MCF 10A (cell line): ENCODE measurements at regions of chrX and their contacts with region 1.

Region 1: GRCh38 chrX:43581888-43582515 is 74.1 kb upstream of the MAOA start:
- DNase-seq: peak; percentile 85
- H3K4me3 Mint-ChIP-seq: no peak overlapping the region
- H3K27ac Mint-ChIP-seq: peak overlapping the region; percentile 84
- H3K4me1 Mint-ChIP-seq: peaks cover 9% of the 10 kb centered on the region
- H3K27me3 Mint-ChIP-seq: peaks cover 12% of the 10 kb centered on the region
- CTCF ChIP-seq: no peak

Region 2: DNA sequence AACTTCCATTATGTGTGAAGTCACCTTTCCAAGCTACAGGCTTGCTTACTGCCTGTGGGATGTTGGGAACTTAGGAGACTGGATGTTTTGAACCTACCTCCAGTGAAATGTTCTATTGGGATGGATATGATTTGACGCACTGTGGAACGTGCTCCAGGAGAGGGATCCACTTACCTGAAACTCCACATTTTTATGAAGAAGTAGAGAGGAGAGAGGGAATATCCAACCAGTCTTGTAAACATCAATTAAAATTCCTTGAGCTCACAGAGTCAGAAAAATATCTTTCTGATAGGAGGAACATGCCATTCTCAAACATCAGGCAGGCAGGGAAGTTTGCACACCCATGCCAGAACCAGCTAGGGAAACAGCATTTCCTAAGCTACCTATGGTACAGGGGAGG is 17.0 kb before region 1 on chrX:
- CTCF ChIA-PET with region 1: interaction called, 5 read pairs
- POLR2A ChIA-PET with region 1: interaction called, 20 read pairs
- intact Hi-C with region 1: no loop called
- DNase-seq: no peak
- H3K4me3 Mint-ChIP-seq: no peak overlapping the region
- H3K27ac Mint-ChIP-seq: no peak overlapping the region
- H3K4me1 Mint-ChIP-seq: peaks cover 20% of the 10 kb centered on the region
- H3K27me3 Mint-ChIP-seq: peaks cover 80% of the 10 kb centered on the region
- CTCF ChIP-seq: no peak

Region 3: DNA sequence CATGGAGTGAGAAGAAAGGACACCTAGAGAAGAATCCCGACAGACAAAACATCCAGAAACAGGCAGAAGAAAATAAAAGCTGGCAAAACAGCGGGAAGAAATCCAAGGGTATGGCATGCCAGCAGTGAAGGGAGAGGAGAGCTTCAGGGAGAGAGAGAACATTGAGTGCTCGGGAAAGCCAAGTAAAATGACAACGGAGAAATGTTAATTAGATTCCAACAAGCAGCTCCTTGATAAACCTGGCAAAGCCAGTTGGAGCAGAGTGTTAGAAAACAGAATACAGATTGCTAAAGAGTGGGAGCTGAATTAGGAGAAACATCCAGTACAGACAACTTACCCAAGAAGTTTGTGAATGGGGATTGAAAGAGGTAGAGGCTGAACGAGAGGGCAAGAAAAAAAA is 33.7 kb after region 1 on chrX:
- CTCF ChIA-PET with region 1: interaction called, 3 read pairs
- POLR2A ChIA-PET with region 1: interaction called, 20 read pairs
- intact Hi-C with region 1: no loop called
- DNase-seq: no peak
- H3K4me3 Mint-ChIP-seq: no peak overlapping the region
- H3K27ac Mint-ChIP-seq: peak overlapping the region; percentile 0
- H3K4me1 Mint-ChIP-seq: peaks cover 11% of the 10 kb centered on the region
- H3K27me3 Mint-ChIP-seq: peaks cover 45% of the 10 kb centered on the region
- CTCF ChIP-seq: no peak

Region 4: DNA sequence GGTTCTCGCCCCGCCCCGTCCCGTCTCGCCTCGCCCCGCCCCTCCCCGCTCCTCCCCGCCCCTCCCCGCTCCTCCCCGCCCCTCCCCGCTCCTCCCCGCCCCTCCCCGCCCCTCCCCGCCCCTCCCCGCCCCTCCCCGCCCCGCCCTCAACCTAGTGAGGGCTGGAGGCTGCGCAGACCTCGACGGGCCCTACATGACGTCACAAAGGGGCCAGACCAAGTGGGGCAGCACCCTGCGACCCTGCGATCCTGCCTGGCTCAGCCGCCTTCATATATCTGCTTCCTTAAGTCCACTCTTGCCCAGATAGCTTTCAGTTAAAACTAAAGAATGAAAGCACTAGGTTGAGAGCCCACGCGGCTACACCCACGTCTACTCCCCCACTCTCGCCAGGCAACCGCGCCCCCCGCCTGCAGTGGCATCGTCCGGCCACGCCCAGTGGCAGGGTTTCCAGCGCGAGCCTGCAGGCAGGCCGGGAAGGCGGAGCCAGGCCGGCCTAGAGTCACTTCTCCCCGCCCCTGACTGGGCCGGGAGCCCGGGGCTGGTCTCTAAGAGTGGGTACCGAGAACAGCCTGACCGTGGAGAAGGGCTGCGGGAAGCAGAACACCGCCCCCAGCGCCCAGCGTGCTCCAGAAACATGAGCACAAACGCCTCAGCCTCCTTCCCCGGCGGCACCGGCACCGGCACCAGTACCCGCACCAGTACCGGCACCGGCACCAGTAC is 72.6 kb after region 1 on chrX:
- CTCF ChIA-PET with region 1: interaction called, 5 read pairs
- POLR2A ChIA-PET with region 1: interaction called, 155 read pairs
- intact Hi-C with region 1: loop called (anchors 2 kb)
- DNase-seq: peak; percentile 91
- H3K4me3 Mint-ChIP-seq: peak overlapping the region; percentile 84
- H3K27ac Mint-ChIP-seq: peak overlapping the region; percentile 100
- H3K4me1 Mint-ChIP-seq: no peaks in the 10 kb centered on the region
- H3K27me3 Mint-ChIP-seq: peaks cover 20% of the 10 kb centered on the region
- CTCF ChIP-seq: no peak

Region 5: DNA sequence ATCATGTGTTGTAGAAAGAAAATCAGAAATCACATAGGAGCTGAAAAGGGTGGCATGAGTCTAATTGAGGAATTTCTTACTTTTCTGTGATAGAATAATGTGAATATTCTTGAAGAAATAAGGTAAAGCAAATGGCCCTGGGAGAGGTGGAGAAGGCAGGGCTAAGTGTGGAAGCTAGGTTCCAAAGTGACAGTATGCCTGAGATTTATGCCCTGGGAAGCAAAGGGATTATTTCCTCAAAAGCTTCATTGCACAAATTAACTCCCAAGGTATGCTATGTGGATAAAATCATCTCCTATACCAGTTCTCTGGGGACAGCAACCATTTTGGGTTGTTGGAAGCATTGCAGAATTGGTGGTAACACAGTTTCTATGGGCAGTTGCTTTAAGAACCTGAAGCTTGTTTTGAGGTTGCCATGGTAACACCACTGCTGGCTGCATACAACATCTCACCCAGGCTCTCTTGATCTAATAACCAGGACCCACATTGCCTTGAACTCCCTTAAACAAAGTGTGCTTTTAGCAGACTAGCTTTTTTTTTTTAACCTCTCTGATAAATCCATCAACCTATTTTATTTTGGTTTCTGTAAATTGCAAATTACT is 95.1 kb after region 1 on chrX:
- CTCF ChIA-PET with region 1: no interaction called
- POLR2A ChIA-PET with region 1: interaction called, 27 read pairs
- intact Hi-C with region 1: no loop called
- DNase-seq: peak; percentile 32
- H3K4me3 Mint-ChIP-seq: no peak overlapping the region
- H3K27ac Mint-ChIP-seq: no peak overlapping the region
- H3K4me1 Mint-ChIP-seq: peaks cover 9% of the 10 kb centered on the region
- H3K27me3 Mint-ChIP-seq: peaks cover 38% of the 10 kb centered on the region
- CTCF ChIP-seq: no peak